MCF 10A (cell line): ENCODE measurements at regions of chr4 and their contacts with region 1.

Region 1: DNA sequence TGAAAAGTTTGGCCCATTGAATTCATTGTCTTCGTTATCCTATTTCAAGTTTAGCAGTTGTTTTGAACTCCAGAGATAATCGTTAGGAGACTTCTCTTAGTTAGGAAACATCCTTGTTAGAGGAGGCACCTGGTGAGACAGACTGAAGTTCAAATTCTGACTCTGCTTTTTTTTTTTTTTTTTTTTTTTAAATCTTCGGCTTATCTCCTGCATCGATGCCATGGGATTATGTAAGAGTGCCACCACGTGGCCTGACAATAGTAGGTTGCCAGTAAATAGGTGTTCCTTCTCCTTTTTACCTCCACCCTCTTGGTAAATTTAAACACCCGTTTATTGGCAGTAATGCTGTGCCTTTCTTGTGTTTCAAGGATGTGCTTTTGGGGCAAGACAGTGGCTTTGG is 149.3 kb downstream of the SOWAHB start:
- DNase-seq: peak; percentile 57
- H3K4me3 Mint-ChIP-seq: no peak overlapping the region
- H3K27ac Mint-ChIP-seq: no peak overlapping the region
- H3K4me1 Mint-ChIP-seq: peaks cover 25% of the 10 kb centered on the region
- H3K27me3 Mint-ChIP-seq: no peaks in the 10 kb centered on the region
- CTCF ChIP-seq: peak; percentile 7

Region 2: GRCh38 chr4:76733068-76733771 is 15.4 kb before region 1 on chr4:
- CTCF ChIA-PET with region 1: interaction called, 12 read pairs
- POLR2A ChIA-PET with region 1: no interaction called
- intact Hi-C with region 1: no loop called
- DNase-seq: peak; percentile 61
- H3K4me3 Mint-ChIP-seq: no peak overlapping the region
- H3K27ac Mint-ChIP-seq: no peak overlapping the region
- H3K4me1 Mint-ChIP-seq: peaks cover 13% of the 10 kb centered on the region
- H3K27me3 Mint-ChIP-seq: no peaks in the 10 kb centered on the region
- CTCF ChIP-seq: peak; percentile 47